AG04449 (cell line): ENCODE measurements at regions of chr12 and their contacts with region 1.

Region 1: DNA sequence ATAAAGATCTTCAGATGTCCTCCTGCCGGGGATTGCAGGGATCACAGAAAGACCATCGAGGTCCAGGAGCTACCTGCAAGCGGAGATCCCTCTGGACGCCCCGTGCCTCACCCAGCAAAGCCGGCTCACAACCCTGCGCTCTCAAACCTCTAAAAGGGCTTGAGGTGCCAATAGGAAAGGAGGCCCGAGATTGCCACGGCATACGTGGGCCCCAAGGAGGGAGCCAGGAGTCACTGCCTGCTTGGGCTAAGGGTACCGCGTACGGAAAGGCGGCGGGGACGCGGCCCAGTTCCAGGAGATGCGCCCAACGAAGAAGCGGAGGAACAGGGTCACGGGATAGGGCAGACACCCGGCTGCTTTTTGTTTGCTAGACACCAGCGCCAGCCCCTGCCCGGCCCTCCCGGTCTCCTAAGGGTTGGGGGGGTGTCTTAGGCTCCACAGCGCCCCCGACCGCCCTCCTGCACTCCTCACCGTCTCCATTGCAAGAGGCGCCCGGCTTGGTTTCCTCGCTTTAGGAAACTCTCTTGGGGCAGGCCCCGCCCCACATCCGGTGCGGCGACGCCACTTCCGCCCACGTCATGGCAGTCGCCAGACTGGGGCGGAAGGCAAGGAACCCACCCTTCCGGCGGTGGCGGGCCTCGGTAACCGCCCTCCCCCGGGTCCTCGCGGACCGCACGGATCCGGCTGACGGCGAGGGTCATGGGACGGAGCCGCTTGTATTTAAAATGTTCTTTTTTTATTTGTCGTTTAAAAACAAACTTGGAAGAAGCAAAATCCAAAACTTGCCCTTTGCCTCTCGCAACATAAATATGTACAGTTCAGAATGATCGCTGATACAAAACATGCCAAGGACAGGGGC is at the start of gene PRKAG1:
- DNase-seq: peak; percentile 77
- H3K4me3 ChIP-seq: peak within 1 kb of the TSS; percentile 98
- CTCF ChIP-seq: peak; percentile 76

Region 2: DNA sequence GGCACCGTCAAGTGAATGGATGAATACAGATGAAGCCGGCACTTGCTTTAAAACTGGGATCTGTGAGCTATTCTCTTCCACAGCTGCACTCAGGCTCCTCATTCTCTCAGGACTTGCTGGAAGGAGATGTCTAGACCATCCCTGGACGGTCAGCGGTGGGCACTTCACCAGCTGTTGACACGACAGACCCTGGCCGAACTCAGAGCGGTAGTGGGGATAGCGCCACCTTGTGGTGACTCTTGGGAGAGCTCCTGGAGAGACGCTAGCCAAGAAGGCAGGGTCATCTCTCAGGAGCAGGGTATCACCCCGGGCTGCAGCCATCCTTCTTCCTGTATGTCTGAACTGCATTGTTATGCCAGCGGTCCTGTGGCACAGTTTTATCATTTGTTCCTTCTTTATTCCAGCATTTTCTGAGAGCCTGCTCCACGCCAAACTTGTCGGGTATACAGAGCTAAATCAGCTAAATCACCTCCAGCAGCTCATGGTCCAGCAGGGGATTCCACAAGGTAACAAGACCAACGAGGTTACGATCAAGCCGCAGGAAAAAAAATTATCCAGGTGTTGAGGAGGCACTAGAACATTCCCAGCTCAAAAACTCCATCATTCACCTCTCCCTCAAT is 30.4 kb before region 1 on chr12:
- CTCF ChIA-PET with region 1: interaction called, 303 read pairs
- POLR2A ChIA-PET with region 1: no interaction called
- DNase-seq: no peak
- H3K4me3 ChIP-seq: no peak overlapping the region
- CTCF ChIP-seq: peak; percentile 85

Region 3: DNA sequence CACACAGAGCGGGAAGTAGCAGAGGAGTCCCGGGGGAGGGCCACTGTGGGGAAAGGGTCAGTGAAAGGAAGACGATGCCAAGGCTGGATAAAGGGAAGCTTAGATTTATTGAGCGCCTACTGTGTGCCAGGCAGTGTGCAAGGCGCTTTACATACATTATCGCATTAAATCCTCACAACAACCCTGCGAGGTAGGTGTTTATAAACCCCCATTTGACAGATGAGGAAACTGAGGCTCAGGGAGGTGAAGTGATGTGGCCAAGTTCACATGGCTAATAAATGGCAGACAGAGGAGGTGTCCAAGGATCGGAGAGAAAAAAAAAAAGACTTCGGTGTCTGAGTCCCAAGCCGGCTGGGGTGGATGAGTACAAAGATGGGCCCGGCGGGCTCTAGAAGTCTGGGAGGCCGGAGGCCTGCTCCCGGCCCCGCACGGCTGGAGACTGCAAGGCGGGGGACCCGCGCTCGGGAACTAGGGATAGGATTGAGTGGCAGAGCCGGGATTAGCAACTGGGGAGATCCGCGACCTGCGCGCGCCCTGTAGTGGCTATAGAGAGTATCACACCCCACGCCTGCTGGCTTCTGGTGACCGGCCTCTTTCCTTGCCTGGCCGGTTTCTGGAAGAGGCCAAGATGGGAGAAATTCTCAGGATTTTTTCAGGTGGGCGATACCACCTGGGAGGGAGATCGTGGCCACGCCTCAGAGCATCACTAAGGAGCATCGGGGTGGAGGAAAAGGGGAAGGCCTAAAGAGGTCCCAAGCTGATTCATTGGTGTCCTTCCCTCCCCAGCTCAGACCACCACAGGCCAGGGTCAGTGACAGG is 23.2 kb before region 1 on chr12:
- CTCF ChIA-PET with region 1: interaction called, 303 read pairs
- POLR2A ChIA-PET with region 1: interaction called, 7 read pairs
- DNase-seq: no peak
- H3K4me3 ChIP-seq: peak overlapping the region; percentile 25
- CTCF ChIP-seq: peak; percentile 83

Region 4: GRCh38 chr12:49031553-49032162 is 13.2 kb after region 1 on chr12:
- CTCF ChIA-PET with region 1: interaction called, 37 read pairs
- POLR2A ChIA-PET with region 1: interaction called, 4 read pairs
- DNase-seq: no peak
- H3K4me3 ChIP-seq: no peak overlapping the region
- CTCF ChIP-seq: no peak

Region 5: GRCh38 chr12:49037111-49037946 is 18.8 kb after region 1 on chr12:
- CTCF ChIA-PET with region 1: interaction called, 37 read pairs
- POLR2A ChIA-PET with region 1: interaction called, 4 read pairs
- DNase-seq: no peak
- H3K4me3 ChIP-seq: no peak overlapping the region
- CTCF ChIP-seq: no peak

Region 6: DNA sequence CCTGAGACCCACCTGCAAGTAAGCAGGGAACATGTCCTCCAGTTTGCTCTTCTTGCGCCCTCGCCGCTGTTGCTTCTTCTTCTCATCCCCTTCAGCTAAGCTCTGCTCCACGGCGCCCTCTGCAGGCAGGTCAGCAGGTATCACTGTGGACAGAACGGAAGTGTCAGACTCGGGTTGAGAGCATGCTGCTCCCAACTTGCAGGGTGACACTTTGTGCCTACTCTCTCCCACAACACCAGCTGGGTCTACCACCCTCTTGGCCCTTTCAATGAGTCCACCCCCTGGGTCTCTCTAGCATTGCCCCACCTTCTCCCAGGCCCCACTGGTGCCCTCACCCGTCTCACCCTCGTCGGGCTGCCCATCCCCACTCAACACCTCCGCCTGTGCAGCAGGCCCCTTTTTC is 25.4 kb after region 1 on chr12:
- CTCF ChIA-PET with region 1: interaction called, 33 read pairs
- POLR2A ChIA-PET with region 1: interaction called, 3 read pairs
- DNase-seq: no peak
- H3K4me3 ChIP-seq: no peak overlapping the region
- CTCF ChIP-seq: peak; percentile 76